ENCODE measurements at regions of chr12 and their contacts with region 1.

Region 1: DNA sequence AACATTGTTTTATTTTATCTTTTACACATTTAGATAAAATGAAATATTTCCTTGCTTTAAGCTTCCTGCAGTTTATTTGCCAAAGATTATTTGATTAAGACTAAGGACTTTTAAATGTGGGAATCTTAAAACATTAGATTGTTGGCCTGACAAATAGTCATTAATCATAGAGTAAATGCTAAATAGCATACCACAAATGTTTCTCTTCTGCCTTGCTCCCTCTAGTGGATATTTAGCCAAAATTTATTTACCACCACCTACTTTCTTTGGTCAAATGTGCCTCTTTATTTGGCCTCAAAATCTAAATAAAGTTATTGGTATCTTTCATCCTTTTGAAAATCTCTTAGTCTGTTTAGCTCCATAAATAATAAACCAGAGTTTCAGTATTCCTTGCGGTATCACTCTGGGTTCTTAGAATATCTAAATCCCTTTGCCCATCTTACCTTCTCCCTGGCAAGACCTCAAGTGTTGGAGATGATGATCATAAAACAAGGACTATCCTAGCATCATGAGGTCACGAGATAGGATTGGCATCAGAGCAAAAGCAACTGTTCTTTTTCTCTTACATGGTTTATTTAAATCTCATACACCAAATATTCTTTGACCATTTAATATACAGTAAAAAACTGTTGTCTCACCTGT is 150.6 kb upstream of the AEBP2 start:
- DNase-seq: no peak
- H3K4me3 Mint-ChIP-seq: no peak overlapping the region
- H3K27ac Mint-ChIP-seq: no peak overlapping the region
- H3K4me1 Mint-ChIP-seq: no peaks in the 10 kb centered on the region
- H3K27me3 Mint-ChIP-seq: peaks cover 2% of the 10 kb centered on the region

Region 2: GRCh38 chr12:18139989-18140596 is 1148.6 kb before region 1 on chr12:
- CTCF ChIA-PET with region 1: no interaction called
- intact Hi-C with region 1: loop called (anchors 1 kb)
- DNase-seq: no peak
- H3K4me3 Mint-ChIP-seq: no peak overlapping the region
- H3K27ac Mint-ChIP-seq: no peak overlapping the region
- H3K4me1 Mint-ChIP-seq: no peaks in the 10 kb centered on the region
- H3K27me3 Mint-ChIP-seq: no peaks in the 10 kb centered on the region

Region 3: GRCh38 chr12:18217966-18218365 is 1070.8 kb before region 1 on chr12:
- CTCF ChIA-PET with region 1: no interaction called
- intact Hi-C with region 1: no loop called
- DNase-seq: no peak
- H3K4me3 Mint-ChIP-seq: no peak overlapping the region
- H3K27ac Mint-ChIP-seq: no peak overlapping the region
- H3K4me1 Mint-ChIP-seq: no peaks in the 10 kb centered on the region
- H3K27me3 Mint-ChIP-seq: no peaks in the 10 kb centered on the region

Region 4: DNA sequence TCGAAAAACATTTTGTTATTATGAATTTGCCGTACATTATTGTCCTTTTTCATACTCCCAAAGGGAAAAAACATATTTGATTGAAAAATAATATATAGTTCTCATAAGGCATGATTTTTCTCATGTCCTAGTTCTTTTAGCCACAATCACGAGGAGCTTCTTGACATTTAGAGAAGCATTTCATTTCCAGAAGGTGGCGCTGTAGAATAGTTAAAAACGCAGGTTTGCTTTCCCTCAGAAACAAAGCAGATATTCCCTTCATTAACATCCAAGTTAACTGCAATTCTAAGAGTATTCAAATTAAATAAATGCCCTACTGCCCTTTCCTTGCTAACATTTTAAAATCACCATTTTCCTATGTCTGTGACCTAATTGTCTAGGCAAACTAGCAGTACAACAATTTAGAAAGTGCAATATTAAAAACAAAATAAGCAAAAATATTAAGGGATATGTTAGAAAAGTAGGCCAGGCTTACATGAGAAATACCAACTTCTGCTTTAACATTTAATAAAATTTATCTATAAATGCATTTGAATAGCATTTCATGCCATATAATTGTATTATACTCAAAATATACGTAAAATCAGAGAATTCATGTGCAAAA is 1038.3 kb before region 1 on chr12:
- CTCF ChIA-PET with region 1: no interaction called
- intact Hi-C with region 1: loop called (anchors 5 kb)
- DNase-seq: peak; percentile 4
- H3K4me3 Mint-ChIP-seq: no peak overlapping the region
- H3K27ac Mint-ChIP-seq: no peak overlapping the region
- H3K4me1 Mint-ChIP-seq: no peaks in the 10 kb centered on the region
- H3K27me3 Mint-ChIP-seq: no peaks in the 10 kb centered on the region

Region 5: DNA sequence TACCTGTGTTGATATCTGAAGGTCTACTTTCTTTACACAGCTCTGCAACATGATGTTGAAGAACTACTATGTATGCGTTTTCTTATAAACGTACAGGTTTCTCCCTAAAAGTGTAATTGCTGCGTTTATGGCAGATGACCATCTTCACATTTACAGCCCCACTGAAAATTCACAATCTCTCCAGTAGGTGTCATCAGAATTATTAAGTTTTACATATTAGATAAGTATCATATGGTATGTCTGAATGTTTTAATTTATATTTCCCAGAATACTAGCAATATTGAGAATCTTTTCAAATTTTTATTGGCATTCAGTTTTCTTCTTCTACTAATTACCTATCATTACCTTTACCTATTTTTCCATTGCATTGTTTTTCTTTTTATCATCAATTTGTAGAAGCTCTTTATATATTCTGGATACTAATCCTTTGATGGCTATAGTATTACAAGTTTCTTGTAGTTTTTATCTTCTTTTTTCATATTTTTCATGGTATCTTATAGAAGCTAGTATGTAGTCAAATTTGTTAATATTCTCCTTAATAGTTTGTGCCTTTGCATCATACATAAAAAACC is 427.4 kb before region 1 on chr12:
- CTCF ChIA-PET with region 1: no interaction called
- intact Hi-C with region 1: loop called (anchors 1 kb)
- DNase-seq: no peak
- H3K4me3 Mint-ChIP-seq: no peak overlapping the region
- H3K27ac Mint-ChIP-seq: no peak overlapping the region
- H3K4me1 Mint-ChIP-seq: no peaks in the 10 kb centered on the region
- H3K27me3 Mint-ChIP-seq: no peaks in the 10 kb centered on the region

Region 6: GRCh38 chr12:19181666-19182426 is 106.9 kb before region 1 on chr12:
- CTCF ChIA-PET with region 1: no interaction called
- intact Hi-C with region 1: loop called (anchors 5 kb)
- DNase-seq: no peak
- H3K4me3 Mint-ChIP-seq: no peak overlapping the region
- H3K27ac Mint-ChIP-seq: no peak overlapping the region
- H3K4me1 Mint-ChIP-seq: no peaks in the 10 kb centered on the region
- H3K27me3 Mint-ChIP-seq: no peaks in the 10 kb centered on the region